Activated naive CD4-positive, alpha-beta T cell treated with anti-CD3 and anti-CD28 coated beads, Interleukin-2, amount 10 ng/mL, durations not matched to agents 7 days and 5 days (primary cell): ENCODE measurements at regions of chr17 and their contacts with region 1.

Region 1: GRCh38 chr17:73429440-73430164 is 117.8 kb upstream of the CDC42EP4 start:
- DNase-seq: peak; percentile 91
- H3K4me3 Mint-ChIP-seq: no peak overlapping the region
- H3K27ac Mint-ChIP-seq: no peak overlapping the region
- H3K4me1 Mint-ChIP-seq: peaks cover 19% of the 10 kb centered on the region
- H3K27me3 Mint-ChIP-seq: peaks cover 6% of the 10 kb centered on the region

Region 2: GRCh38 chr17:73645050-73645978 is 215.7 kb after region 1 on chr17:
- CTCF ChIA-PET with region 1: interaction called, 19 read pairs
- DNase-seq: peak; percentile 64
- H3K4me3 Mint-ChIP-seq: peak overlapping the region; percentile 65
- H3K27ac Mint-ChIP-seq: no peak overlapping the region
- H3K4me1 Mint-ChIP-seq: peaks cover 28% of the 10 kb centered on the region
- H3K27me3 Mint-ChIP-seq: peaks cover 92% of the 10 kb centered on the region